ENCODE measurements at regions of chr11 and their contacts with region 1.

Region 1: GRCh38 chr11:123560006-123560405 is 94.4 kb downstream of the SCN3B start:
- DNase-seq: no peak
- CTCF ChIP-seq: no peak

Region 2: GRCh38 chr11:123103326-123103980 is 456.6 kb before region 1 on chr11:
- in situ Hi-C with region 1: loop called (anchors 25 kb)
- DNase-seq: no peak
- CTCF ChIP-seq: peak; percentile 22

Region 3: GRCh38 chr11:123511037-123511870 is 48.8 kb before region 1 on chr11:
- in situ Hi-C with region 1: loop called (anchors 10 kb)
- DNase-seq: peak; percentile 67
- CTCF ChIP-seq: peak; percentile 91

Measured in GM13977 (cell line).